Heart left ventricle (tissue), 16 donors: ENCODE measurements at regions of chr5 and their contacts with region 1.

Region 1: DNA sequence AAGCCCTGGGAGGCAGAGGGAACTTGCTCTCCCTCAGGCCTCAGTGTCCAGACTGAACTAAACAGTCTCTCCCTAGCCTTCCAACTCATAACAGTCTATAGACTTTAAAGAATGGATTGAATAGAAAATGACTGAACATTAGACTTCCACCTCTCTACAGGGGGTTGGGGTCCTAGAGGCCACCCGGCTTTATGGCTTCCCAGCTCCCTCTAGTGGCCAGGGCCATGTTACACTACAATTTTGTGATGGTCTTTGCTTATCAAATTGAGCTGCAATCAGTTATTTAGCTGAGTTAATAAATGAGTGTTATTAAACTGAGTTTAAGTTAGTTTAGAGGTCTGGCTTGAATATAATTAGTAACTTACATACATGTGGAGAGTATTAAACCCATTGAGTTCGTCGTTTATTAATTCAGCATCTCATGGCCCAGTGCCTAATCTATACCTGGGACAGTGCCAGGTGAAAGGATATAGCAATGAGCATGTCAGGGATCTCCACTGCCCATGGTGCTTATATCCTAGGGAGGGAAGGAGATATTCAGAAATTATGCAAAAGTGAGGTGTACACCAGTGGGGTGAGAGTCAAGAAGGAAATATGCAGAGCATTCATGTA is 105.2 kb downstream of the SH3TC2 start:
- DNase-seq: peak in 3 of 5 donors; percentile 20 to 47 (median 29)
- ATAC-seq: peak in 2 of 4 donors; percentile 43 to 53
- H3K4me3 ChIP-seq: no peak overlapping the region
- H3K27ac ChIP-seq: no peak overlapping the region
- H3K4me1 ChIP-seq: peaks cover 0 to 12% (median 0%) of the 10 kb centered on the region in 12 donors
- H3K27me3 ChIP-seq: no peaks in the 10 kb centered on the region
- CTCF ChIP-seq: peak; percentile 69 to 88 (median 80)
- POLR2A ChIP-seq: no peak

Region 2: GRCh38 chr5:148820461-148821395 is 137.0 kb before region 1 on chr5:
- intact Hi-C with region 1: loop called in 9 of 10 experiments (anchors 2 to 10 kb)
- DNase-seq: no peak
- ATAC-seq: no peak
- H3K4me3 ChIP-seq: no peak overlapping the region
- H3K27ac ChIP-seq: no peak overlapping the region
- H3K4me1 ChIP-seq: peaks cover 0 to 47% (median 6%) of the 10 kb centered on the region in 12 donors
- H3K27me3 ChIP-seq: no peaks in the 10 kb centered on the region
- CTCF ChIP-seq: peak; percentile 38 to 70 (median 58)
- POLR2A ChIP-seq: no peak

Region 3: DNA sequence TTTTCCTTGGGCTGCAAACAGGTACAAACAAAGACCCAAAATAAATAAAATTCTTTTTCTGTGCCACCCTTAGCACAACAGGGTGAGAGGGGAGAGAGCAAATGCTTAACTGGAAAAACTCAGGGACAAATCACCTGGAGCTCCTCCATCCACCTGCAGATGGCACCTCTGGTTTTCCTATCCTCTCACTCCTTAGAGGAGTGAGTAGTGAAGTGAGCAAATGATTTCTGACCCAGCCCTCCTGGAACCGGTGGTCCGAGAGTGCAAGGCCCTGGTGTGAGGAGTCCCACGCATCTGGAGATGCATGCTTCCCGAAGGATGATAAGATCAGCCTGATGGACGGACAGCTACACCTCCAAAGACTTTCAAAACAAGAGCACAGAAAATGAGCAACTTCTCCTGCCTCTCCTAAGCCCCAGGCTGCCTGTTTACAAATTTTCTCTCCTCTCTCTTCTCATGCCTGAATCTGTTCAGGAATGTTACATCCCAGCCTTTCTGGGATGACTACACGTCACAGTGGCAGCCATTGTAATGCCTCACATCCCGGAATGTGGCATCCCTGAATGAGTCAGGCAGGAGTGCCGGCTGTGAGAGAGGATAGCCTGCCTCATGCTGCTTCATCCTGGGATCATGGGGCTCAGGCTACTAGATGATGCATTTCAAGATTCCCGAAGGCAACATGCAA is 44.8 kb before region 1 on chr5:
- intact Hi-C with region 1: loop called in 1 of 10 experiments (anchors 5 kb)
- DNase-seq: no peak
- ATAC-seq: peak in 2 of 4 donors; percentile 27 to 37
- H3K4me3 ChIP-seq: no peak overlapping the region
- H3K27ac ChIP-seq: peak overlapping the region in 1 of 12 donors; percentile 33
- H3K4me1 ChIP-seq: peaks cover 0 to 25% (median 11%) of the 10 kb centered on the region in 12 donors
- H3K27me3 ChIP-seq: no peaks in the 10 kb centered on the region
- CTCF ChIP-seq: peak in 7 of 12 donors; percentile 10 to 25 (median 15)
- POLR2A ChIP-seq: no peak

Region 4: GRCh38 chr5:148933903-148934432 is 23.7 kb before region 1 on chr5:
- intact Hi-C with region 1: loop called in 1 of 10 experiments (anchors 2 kb)
- DNase-seq: no peak
- ATAC-seq: peak in 3 of 4 donors; percentile 32 to 59 (median 39)
- H3K4me3 ChIP-seq: no peak overlapping the region
- H3K27ac ChIP-seq: peak overlapping the region in 1 of 12 donors; percentile 21
- H3K4me1 ChIP-seq: peaks cover 0 to 15% (median 7%) of the 10 kb centered on the region in 12 donors
- H3K27me3 ChIP-seq: no peaks in the 10 kb centered on the region
- CTCF ChIP-seq: no peak
- POLR2A ChIP-seq: no peak

Region 5: DNA sequence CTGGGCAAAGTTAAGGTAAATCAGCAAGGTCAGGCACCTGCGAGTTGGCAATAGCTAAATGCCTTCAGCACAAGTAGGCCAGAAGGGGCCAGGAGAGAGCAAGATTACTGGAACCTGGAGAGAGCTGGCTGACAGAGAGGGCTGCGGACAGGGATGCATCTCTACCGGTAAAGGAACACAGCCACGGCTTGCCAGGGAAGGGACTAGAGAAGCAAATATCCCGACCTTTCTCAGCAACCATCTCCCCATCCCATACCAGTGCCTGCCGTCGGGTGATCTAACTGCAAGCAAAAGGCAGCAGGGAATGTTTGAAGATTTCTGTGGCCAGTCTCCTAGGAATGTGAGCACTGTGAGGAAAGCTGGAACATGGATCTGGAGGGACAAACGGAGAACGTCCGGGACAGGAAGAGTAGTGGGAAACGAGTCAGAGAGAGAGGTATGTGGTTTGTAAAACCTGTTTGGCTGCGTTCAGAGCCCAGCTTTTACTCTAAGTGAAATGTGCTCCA is 167.7 kb after region 1 on chr5:
- intact Hi-C with region 1: no loop called
- DNase-seq: no peak
- ATAC-seq: peak in 1 of 4 donors; percentile 34
- H3K4me3 ChIP-seq: no peak overlapping the region
- H3K27ac ChIP-seq: peak overlapping the region in 1 of 12 donors; percentile 23
- H3K4me1 ChIP-seq: peaks cover 0 to 7% (median 3%) of the 10 kb centered on the region in 12 donors
- H3K27me3 ChIP-seq: no peaks in the 10 kb centered on the region
- CTCF ChIP-seq: peak in 3 of 12 donors; percentile 11 to 26 (median 11)
- POLR2A ChIP-seq: no peak